GM12878 (cell line): ENCODE measurements at regions of chr5 and their contacts with region 1.

Region 1: DNA sequence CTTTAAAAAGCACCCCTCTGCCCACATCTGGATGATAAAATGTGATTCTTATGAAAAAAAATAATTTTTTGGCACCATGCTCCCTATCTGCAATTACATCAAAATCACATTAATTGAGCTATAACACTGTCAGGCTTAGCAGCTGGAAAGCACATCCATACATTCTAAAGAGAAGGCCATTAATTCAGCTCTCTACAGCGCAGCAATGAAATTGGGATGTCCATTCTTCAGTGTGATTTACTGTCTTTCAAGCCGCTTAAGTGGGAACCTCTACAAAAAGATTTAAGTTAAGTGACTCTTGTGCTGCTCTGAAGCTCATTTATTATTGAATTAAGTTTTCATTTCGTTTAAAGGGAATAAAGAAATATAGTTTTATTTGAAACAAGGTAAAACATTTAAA is 171.3 kb downstream of the EBF1 start:
- DNase-seq: no peak
- ATAC-seq: no peak
- H3K4me3 ChIP-seq: no peak overlapping the region
- H3K27ac ChIP-seq: no peak overlapping the region
- H3K4me1 ChIP-seq: peaks cover 3% of the 10 kb centered on the region
- H3K27me3 ChIP-seq: no peaks in the 10 kb centered on the region
- CTCF ChIP-seq: no peak
- EP300 ChIP-seq: no peak
- POLR2A ChIP-seq: no peak
- RAD21 ChIP-seq: no peak

Region 2: DNA sequence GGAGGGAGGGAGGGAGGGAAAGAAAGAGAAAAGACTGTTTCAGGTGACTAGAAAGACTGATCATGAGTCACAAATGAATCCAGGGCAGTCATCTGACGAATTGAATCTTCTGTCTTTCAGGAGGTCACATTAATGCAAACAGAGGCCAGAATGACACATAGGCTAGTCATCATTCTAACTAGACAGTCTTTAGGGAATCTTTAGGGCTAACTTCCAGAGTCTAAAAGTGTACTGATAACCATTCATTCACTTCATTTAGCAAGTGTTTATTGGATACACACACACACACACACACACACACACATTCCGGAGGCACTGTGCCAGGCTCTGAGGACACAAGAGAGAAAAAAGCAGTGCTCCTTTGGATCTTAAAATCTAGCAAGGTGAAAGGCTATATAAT is 14.7 kb after region 1 on chr5:
- CTCF ChIA-PET with region 1: interaction called, 6 read pairs
- POLR2A ChIA-PET with region 1: interaction called, 6 read pairs
- RAD21 ChIA-PET with region 1: interaction called, 21 read pairs
- SMC1A ChIA-PET with region 1: interaction called, 37 read pairs
- in situ Hi-C with region 1: no loop called
- intact Hi-C with region 1: no loop called
- DNase-seq: no peak
- ATAC-seq: peak; percentile 74
- H3K4me3 ChIP-seq: no peak overlapping the region
- H3K27ac ChIP-seq: no peak overlapping the region
- H3K4me1 ChIP-seq: peaks cover 15% of the 10 kb centered on the region; the same call in 1 of the 2 replicates
- H3K27me3 ChIP-seq: no peaks in the 10 kb centered on the region
- CTCF ChIP-seq: no peak
- EP300 ChIP-seq: no peak
- POLR2A ChIP-seq: no peak
- RAD21 ChIP-seq: no peak